ENCODE measurements at regions of chr10 and their contacts with region 1.

Region 1: GRCh38 chr10:30591249-30591670 is 38.3 kb downstream of the LYZL2 start:
- DNase-seq: no peak
- ATAC-seq: peak in 1 of 2 donors; percentile 51
- H3K4me3 ChIP-seq: no peak overlapping the region
- H3K27ac ChIP-seq: no peak overlapping the region
- H3K4me1 ChIP-seq: no peaks in the 10 kb centered on the region
- H3K27me3 ChIP-seq: no peaks in the 10 kb centered on the region

Region 2: DNA sequence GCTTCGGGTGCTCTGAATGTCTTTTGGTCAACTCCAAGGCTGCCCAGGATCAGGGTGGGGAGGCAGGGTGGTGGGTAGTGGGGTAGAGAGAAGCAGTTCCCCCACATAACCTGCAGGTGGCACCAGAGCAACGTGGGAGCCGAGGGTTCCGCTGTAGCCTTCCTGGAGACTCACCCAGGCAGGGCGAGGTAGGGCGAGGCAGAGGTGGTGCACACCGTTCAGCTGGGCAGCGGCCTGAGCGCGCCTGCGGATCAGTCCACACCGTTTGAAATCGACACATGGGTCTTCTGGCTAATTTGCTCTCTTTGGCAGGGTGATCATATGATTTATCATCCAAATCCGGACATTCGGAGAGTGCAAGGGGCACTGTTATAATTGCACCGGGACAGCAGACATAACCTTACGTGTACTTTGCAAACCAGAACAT is 198.7 kb before region 1 on chr10:
- intact Hi-C with region 1: loop called (anchors 2 to 5 kb)
- DNase-seq: peak; percentile 73 to 88 (median 87)
- ATAC-seq: peak; percentile 94 to 98
- H3K4me3 ChIP-seq: no peak overlapping the region
- H3K27ac ChIP-seq: no peak overlapping the region
- H3K4me1 ChIP-seq: peaks cover 2% of the 10 kb centered on the region
- H3K27me3 ChIP-seq: no peaks in the 10 kb centered on the region

Region 3: DNA sequence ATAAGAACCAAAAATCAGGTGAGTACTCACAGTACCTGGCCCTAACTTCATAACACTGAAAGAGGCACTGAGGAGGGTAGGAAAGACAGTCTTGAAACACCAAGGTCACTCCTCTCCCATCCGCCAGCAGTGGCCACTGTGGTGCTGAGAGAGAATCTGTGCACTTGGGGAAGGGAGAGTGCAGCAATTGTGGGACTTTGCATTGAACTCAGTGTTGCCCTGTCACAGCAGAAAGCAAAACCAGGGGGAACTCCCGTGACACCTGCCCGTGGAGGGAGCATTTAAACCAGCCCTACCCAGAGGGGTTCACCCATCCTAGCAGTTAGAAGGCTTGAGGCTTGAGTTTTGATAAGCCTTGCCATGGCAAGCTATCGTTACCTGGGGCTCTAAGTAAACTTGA is 192.5 kb before region 1 on chr10:
- intact Hi-C with region 1: loop called (anchors 2 to 5 kb)
- DNase-seq: no peak
- ATAC-seq: no peak
- H3K4me3 ChIP-seq: no peak overlapping the region
- H3K27ac ChIP-seq: no peak overlapping the region
- H3K4me1 ChIP-seq: peaks cover 2% of the 10 kb centered on the region
- H3K27me3 ChIP-seq: no peaks in the 10 kb centered on the region

Measured in right cardiac atrium (tissue), 5 donors.